ENCODE measurements at regions of chr9 and their contacts with region 1.

Region 1: DNA sequence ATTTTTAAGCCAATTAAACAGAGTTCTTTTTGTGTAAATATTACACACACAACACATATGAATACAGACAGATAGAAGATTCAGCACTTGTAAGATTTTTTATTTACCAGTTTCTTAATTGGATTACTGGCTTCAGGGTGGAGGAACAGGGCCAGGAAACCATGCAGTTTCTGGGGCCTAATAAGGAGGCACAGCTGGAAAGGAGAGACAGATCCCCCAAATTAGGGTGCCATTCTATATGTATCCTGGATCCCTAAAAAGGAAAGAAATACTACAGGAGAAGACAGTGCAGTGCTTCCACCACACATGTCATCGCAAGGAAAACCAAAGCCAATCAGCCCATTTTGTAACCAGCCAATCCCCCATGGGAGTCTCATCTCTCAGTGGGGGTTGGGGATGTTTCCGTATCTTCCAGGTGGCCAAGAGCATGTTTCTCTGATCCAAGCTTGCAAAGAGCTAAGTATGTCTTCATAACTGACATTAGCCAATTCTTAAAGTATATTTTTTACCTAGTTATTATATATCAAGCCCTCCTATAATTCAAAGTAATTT is 15.8 kb upstream of the ABO start:
- DNase-seq: no peak
- H3K4me3 ChIP-seq: no peak overlapping the region
- H3K27ac ChIP-seq: no peak overlapping the region
- H3K4me1 ChIP-seq: no peaks in the 10 kb centered on the region
- H3K27me3 ChIP-seq: no peaks in the 10 kb centered on the region
- CTCF ChIP-seq: no peak
- POLR2A ChIP-seq: no peak

Region 2: DNA sequence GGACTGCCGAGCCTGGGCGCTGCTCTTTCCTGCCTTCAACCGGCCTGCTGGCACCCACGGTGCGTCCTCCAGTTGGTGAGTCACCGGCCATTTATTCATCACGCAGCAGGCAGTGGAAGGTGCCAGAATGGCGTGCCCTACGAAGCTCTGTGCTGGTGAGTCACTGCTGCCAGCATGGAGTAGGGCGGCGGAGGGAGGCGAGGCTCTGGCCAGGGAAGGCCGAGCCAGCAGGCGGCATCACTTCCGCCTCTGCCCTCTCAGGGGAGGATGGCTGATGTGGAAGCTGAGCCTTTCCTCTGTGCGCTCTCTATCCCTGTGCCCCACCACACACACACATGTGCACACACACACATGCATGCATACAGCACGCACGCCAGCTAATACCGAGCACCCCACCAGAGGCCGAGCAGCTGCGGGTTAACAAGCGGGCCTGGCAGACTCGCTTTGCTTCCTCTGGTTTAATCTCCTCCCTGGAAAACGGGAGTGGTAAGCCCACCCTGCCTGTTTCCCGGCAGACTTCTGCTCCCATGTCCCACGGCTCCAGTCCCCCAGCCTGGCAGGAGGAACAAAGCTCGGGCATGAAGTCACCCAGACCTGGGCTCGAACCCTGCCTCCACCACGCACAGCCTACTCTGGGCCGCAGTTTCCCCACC is 1835.8 kb after region 1 on chr9:
- intact Hi-C with region 1: loop called (anchors 10 kb)
- DNase-seq: peak in 1 of 2 donors; percentile 32
- H3K4me3 ChIP-seq: no peak overlapping the region
- H3K27ac ChIP-seq: no peak overlapping the region
- H3K4me1 ChIP-seq: no peaks in the 10 kb centered on the region
- H3K27me3 ChIP-seq: peaks cover 0 to 42% of the 10 kb centered on the region in 2 donors
- CTCF ChIP-seq: no peak
- POLR2A ChIP-seq: no peak

Measured in breast epithelium (tissue), 4 donors.